ENCODE measurements at regions of chr10 and their contacts with region 1.

Region 1: DNA sequence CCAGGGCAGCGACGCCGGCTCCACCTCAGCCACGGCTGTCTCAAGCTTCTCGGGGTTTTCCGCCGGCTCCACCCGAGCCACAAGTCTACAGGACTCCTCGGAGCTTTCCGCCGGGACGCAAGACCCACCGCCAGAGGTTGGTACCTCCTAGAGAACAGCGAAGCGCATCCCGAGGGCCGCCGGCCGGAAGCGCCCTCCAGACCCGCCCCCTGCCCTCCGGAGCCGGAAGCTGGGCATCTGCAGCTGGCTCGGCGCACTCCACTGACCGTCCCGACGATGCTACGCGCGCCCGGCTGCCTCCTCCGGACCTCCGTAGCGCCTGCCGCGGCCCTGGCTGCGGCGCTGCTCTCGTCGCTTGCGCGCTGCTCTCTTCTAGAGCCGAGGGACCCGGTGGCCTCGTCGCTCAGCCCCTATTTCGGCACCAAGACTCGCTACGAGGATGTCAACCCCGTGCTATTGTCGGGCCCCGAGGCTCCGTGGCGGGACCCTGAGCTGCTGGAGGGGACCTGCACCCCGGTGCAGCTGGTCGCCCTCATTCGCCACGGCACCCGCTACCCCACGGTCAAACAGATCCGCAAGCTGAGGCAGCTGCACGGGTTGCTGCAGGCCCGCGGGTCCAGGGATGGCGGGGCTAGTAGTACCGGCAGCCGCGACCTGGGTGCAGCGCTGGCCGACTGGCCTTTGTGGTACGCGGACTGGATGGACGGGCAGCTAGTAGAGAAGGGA is at the start of gene MINPP1:
- DNase-seq: peak; percentile 83 to 91 (median 87)
- ATAC-seq: peak; percentile 96 to 99 (median 98)
- H3K4me3 ChIP-seq: peak within 1 kb of the TSS; percentile 64 to 97 (median 89)
- H3K27ac ChIP-seq: peak within 1 kb of the TSS; percentile 53 to 93 (median 80)
- H3K4me1 ChIP-seq: peaks cover 0 to 28% (median 19%) of the 10 kb centered on the region in 12 donors
- H3K27me3 ChIP-seq: no peaks in the 10 kb centered on the region
- CTCF ChIP-seq: no peak
- POLR2A ChIP-seq: peak in 1 of 2 donors; percentile 46
- total RNA-seq, gene MINPP1: 5.5 to 10.0 (median 6.8) TPM

Region 2: GRCh38 chr10:87559392-87559791 is 54.6 kb after region 1 on chr10:
- intact Hi-C with region 1: loop called in 1 of 10 experiments (anchors 5 kb)
- DNase-seq: no peak
- ATAC-seq: no peak
- H3K4me3 ChIP-seq: no peak overlapping the region
- H3K27ac ChIP-seq: no peak overlapping the region
- H3K4me1 ChIP-seq: no peaks in the 10 kb centered on the region
- H3K27me3 ChIP-seq: no peaks in the 10 kb centered on the region
- CTCF ChIP-seq: no peak
- POLR2A ChIP-seq: no peak

Region 3: GRCh38 chr10:87622314-87623004 is 117.7 kb after region 1 on chr10:
- intact Hi-C with region 1: no loop called
- DNase-seq: no peak
- ATAC-seq: no peak
- H3K4me3 ChIP-seq: no peak overlapping the region
- H3K27ac ChIP-seq: no peak overlapping the region
- H3K4me1 ChIP-seq: no peaks in the 10 kb centered on the region
- H3K27me3 ChIP-seq: peaks cover 0 to 16% (median 0%) of the 10 kb centered on the region in 9 donors
- CTCF ChIP-seq: no peak
- POLR2A ChIP-seq: no peak

Region 4: DNA sequence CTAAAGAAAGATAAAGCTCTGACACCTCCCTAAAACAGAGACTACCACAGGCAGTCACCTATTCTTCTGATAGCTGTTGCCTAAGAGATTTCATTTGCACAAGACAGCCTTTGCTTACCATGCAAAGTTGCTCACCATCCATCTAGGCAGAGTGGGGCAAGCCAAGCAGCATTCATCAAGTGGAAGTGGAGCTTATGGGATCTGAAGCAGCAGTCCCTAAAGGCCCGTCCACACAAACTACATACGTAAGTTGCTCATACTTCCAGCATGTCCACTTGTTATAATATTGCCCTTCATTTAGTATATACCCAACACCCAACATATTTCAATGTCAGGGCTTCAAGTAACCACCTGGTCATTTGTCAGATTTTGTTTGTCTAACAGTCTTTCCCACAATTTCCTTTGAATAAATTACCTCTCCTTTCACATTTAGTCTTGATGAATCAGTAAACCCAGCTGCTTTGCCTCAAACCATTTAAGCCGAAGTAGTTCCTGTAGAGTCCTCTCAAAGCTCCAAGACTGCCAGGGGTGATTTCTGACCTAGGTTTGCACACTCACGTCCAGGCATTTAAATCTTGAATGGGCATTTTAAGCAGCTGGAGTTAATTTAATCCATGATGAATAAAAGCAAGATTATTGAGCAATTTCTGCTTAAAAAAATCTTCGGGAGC is 245.3 kb after region 1 on chr10:
- intact Hi-C with region 1: no loop called
- DNase-seq: no peak
- ATAC-seq: peak in 2 of 4 donors; percentile 24 to 43
- H3K4me3 ChIP-seq: no peak overlapping the region
- H3K27ac ChIP-seq: no peak overlapping the region
- H3K4me1 ChIP-seq: no peaks in the 10 kb centered on the region
- H3K27me3 ChIP-seq: no peaks in the 10 kb centered on the region
- CTCF ChIP-seq: no peak
- POLR2A ChIP-seq: no peak

Region 5: DNA sequence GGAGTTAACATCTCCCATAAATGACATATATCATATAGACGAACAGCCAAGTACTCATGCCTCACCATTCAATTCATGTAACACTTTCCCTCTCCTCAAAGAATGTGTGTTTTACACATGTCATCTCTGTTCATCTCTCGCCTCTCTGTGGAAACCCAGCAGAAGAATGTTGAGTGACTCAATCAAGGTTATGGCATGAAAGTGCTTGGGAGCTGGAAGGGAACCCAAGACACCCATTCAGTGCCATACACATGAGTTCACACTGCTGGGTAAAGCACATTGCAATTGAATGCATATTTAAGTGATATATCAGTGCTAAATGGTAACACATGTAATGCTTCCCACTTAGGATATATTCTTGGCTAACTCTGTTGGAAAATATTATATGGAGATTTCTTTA is 681.5 kb after region 1 on chr10:
- intact Hi-C with region 1: no loop called
- DNase-seq: no peak
- ATAC-seq: peak in 2 of 4 donors; percentile 36 to 50
- H3K4me3 ChIP-seq: no peak overlapping the region
- H3K27ac ChIP-seq: no peak overlapping the region
- H3K4me1 ChIP-seq: peaks cover 0 to 5% (median 0%) of the 10 kb centered on the region in 12 donors
- H3K27me3 ChIP-seq: no peaks in the 10 kb centered on the region
- CTCF ChIP-seq: no peak
- POLR2A ChIP-seq: no peak

Measured in heart left ventricle (tissue), 16 donors.